B cell (primary cell): ENCODE measurements at regions of chr4 and their contacts with region 1.

Region 1: GRCh38 chr4:88514557-88515511 is 8.7 kb downstream of the PYURF start:
- DNase-seq: no peak
- ATAC-seq: no peak
- H3K4me3 ChIP-seq: no peak overlapping the region
- H3K4me3 Mint-ChIP-seq: no peak overlapping the region
- H3K27ac ChIP-seq: no peak overlapping the region
- H3K27ac Mint-ChIP-seq: no peak overlapping the region
- H3K4me1 ChIP-seq: no peaks in the 10 kb centered on the region
- H3K4me1 Mint-ChIP-seq: no peaks in the 10 kb centered on the region
- H3K27me3 ChIP-seq: no peaks in the 10 kb centered on the region
- H3K27me3 Mint-ChIP-seq: peaks cover 3% of the 10 kb centered on the region
- CTCF ChIP-seq: no peak

Region 2: DNA sequence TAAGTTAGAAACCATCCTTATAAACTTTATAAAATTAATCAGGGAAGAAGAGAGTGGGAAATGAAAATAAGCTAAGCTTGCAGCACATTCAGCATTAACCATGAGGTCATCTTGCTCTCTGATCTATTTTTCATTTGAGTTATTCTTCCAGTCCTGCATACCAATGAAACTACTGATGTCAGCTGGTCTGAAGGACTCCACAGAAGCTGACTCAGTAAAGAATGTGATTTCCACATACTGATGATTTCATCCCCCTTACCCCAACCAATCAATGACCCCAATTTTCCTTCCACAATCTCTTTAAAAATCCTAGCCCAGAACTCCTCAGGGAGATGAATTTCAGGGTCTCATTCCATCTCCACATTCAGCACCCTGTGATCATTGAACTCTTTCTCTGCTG is 925.3 kb before region 1 on chr4:
- CTCF ChIA-PET with region 1: no interaction called
- POLR2A ChIA-PET with region 1: no interaction called
- intact Hi-C with region 1: no loop called
- DNase-seq: no peak
- ATAC-seq: no peak
- H3K4me3 ChIP-seq: no peak overlapping the region
- H3K4me3 Mint-ChIP-seq: no peak overlapping the region
- H3K27ac ChIP-seq: no peak overlapping the region
- H3K27ac Mint-ChIP-seq: no peak overlapping the region
- H3K4me1 ChIP-seq: no peaks in the 10 kb centered on the region
- H3K4me1 Mint-ChIP-seq: no peaks in the 10 kb centered on the region
- H3K27me3 ChIP-seq: no peaks in the 10 kb centered on the region
- H3K27me3 Mint-ChIP-seq: no peaks in the 10 kb centered on the region
- CTCF ChIP-seq: no peak

Region 3: GRCh38 chr4:87848622-87849351 is 666.0 kb before region 1 on chr4:
- CTCF ChIA-PET with region 1: interaction called, 3 read pairs
- POLR2A ChIA-PET with region 1: no interaction called
- intact Hi-C with region 1: loop called (anchors 5 kb)
- DNase-seq: peak; percentile 44
- ATAC-seq: no peak
- H3K4me3 ChIP-seq: peak overlapping the region in 4 of 5 experiments; percentile 14 to 48 (median 32)
- H3K4me3 Mint-ChIP-seq: peak overlapping the region; percentile 58
- H3K27ac ChIP-seq: no peak overlapping the region
- H3K27ac Mint-ChIP-seq: no peak overlapping the region
- H3K4me1 ChIP-seq: peaks cover 4 to 7% of the 10 kb centered on the region in 2 donors
- H3K4me1 Mint-ChIP-seq: peaks cover 7% of the 10 kb centered on the region
- H3K27me3 ChIP-seq: peaks cover 0 to 3% (median 0%) of the 10 kb centered on the region in 4 experiments
- H3K27me3 Mint-ChIP-seq: peaks cover 12% of the 10 kb centered on the region
- CTCF ChIP-seq: peak; percentile 66

Region 4: GRCh38 chr4:87911252-87911774 is 603.5 kb before region 1 on chr4:
- CTCF ChIA-PET with region 1: no interaction called
- POLR2A ChIA-PET with region 1: no interaction called
- intact Hi-C with region 1: no loop called
- DNase-seq: no peak
- ATAC-seq: no peak
- H3K4me3 ChIP-seq: no peak overlapping the region
- H3K4me3 Mint-ChIP-seq: no peak overlapping the region
- H3K27ac ChIP-seq: no peak overlapping the region
- H3K27ac Mint-ChIP-seq: no peak overlapping the region
- H3K4me1 ChIP-seq: no peaks in the 10 kb centered on the region
- H3K4me1 Mint-ChIP-seq: no peaks in the 10 kb centered on the region
- H3K27me3 ChIP-seq: peaks cover 0 to 2% (median 0%) of the 10 kb centered on the region in 4 experiments
- H3K27me3 Mint-ChIP-seq: peaks cover 3% of the 10 kb centered on the region
- CTCF ChIP-seq: no peak

Region 5: DNA sequence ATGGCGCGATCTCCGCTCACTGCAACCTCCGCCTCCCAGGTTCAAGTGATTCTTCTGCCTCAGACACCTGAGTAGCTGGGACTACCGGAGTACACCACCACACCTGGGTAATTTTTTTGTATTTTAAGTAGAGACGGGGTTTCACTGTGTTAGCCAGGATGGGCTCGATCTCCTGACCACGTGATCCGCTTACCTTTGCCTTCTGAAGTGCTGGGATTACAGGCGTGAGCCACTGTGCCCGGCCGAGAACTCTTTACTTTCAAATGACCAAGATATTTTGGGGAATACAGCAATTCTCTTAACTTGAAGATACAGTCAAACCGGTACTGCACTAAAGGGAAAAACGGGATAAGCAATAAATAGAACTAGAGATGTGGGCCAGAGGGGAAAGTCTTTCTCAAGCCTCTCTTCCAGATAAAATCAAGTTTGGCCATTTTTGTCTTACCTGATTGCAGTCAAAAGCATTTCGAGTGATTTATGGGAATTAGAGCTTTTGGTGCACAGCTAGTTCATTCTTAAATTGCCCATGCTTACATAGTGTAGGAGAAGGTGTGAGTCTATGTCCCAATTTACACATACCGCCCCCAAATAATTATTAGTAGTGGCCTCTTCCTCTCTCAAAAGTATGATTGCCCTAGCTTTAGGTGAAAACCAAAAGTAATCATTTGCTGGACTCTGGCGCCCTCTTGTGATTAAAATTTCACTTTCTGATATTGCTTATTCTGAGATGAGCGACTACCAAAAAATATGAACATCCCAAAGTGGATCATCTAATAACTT is 303.2 kb before region 1 on chr4:
- CTCF ChIA-PET with region 1: interaction called, 506 read pairs
- POLR2A ChIA-PET with region 1: no interaction called
- intact Hi-C with region 1: no loop called
- DNase-seq: peak; percentile 73
- ATAC-seq: peak; percentile 57
- H3K4me3 ChIP-seq: no peak overlapping the region
- H3K4me3 Mint-ChIP-seq: no peak overlapping the region
- H3K27ac ChIP-seq: no peak overlapping the region
- H3K27ac Mint-ChIP-seq: no peak overlapping the region
- H3K4me1 ChIP-seq: no peaks in the 10 kb centered on the region
- H3K4me1 Mint-ChIP-seq: no peaks in the 10 kb centered on the region
- H3K27me3 ChIP-seq: peaks cover 0 to 2% (median 0%) of the 10 kb centered on the region in 4 experiments
- H3K27me3 Mint-ChIP-seq: no peaks in the 10 kb centered on the region
- CTCF ChIP-seq: peak; percentile 89

Region 6: DNA sequence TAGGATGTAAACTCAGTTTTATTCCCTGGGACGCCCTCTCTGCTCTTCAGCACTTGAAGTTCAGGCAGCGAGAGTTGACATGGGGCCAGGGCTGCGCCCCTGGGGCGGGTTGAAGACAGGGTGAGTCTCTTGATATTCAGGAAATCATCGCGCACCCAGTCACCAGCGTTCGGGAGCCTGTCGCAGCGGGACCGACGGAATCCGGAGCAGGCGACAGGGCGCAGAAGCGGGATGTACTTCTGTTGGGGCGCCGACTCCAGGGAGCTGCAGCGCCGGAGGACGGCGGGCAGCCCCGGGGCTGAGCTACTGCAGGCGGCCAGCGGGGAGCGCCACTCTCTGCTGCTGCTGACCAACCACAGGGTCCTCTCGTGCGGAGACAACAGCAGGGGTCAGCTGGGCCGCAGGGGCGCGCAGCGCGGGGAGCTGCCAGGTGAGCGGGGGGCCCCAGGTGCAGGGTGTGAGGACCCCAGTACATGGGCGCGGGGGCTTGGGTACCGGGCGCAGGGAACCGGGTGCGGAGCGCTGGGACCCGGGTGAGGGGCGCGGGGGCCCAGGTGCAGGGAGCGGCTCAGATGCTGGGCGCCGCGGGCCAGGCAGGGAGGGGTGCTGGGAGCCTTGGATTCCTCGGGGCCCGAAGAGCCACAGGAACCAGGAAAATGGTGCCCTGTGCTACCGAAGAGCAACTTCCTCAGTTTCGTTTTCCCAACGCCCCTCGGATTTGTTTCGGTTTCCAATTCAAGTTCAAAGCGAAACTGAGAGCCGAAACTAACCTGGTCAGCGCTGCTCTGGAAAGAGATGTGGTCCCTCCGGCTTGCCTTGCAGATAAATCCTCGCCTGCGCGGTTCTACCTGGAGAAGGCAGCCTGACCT is 135.9 kb before region 1 on chr4 and contains the start of gene HERC6:
- CTCF ChIA-PET with region 1: interaction called, 10 read pairs
- POLR2A ChIA-PET with region 1: no interaction called
- intact Hi-C with region 1: no loop called
- DNase-seq: peak; percentile 90
- ATAC-seq: peak; percentile 84
- H3K4me3 ChIP-seq: peak within 1 kb of the TSS; percentile 74 to 99 (median 96)
- H3K4me3 Mint-ChIP-seq: peak within 1 kb of the TSS; percentile 90
- H3K27ac ChIP-seq: peak within 1 kb of the TSS; percentile 84 to 89
- H3K27ac Mint-ChIP-seq: peak within 1 kb of the TSS; percentile 88
- H3K4me1 ChIP-seq: peaks cover 10 to 15% of the 10 kb centered on the region in 2 donors
- H3K4me1 Mint-ChIP-seq: peaks cover 26% of the 10 kb centered on the region
- H3K27me3 ChIP-seq: no peaks in the 10 kb centered on the region
- H3K27me3 Mint-ChIP-seq: no peaks in the 10 kb centered on the region
- CTCF ChIP-seq: peak; percentile 78
- total RNA-seq, gene HERC6: 10.9 and 11.3 TPM in 2 replicates

Region 7: GRCh38 chr4:88831031-88831430 is 316.2 kb after region 1 on chr4:
- CTCF ChIA-PET with region 1: no interaction called
- POLR2A ChIA-PET with region 1: no interaction called
- intact Hi-C with region 1: no loop called
- DNase-seq: no peak
- ATAC-seq: no peak
- H3K4me3 ChIP-seq: no peak overlapping the region
- H3K4me3 Mint-ChIP-seq: no peak overlapping the region
- H3K27ac ChIP-seq: no peak overlapping the region
- H3K27ac Mint-ChIP-seq: no peak overlapping the region
- H3K4me1 ChIP-seq: no peaks in the 10 kb centered on the region
- H3K4me1 Mint-ChIP-seq: no peaks in the 10 kb centered on the region
- H3K27me3 ChIP-seq: peaks cover 0 to 1% (median 0%) of the 10 kb centered on the region in 4 experiments
- H3K27me3 Mint-ChIP-seq: peaks cover 5% of the 10 kb centered on the region
- CTCF ChIP-seq: no peak